T-cell (primary cell): ENCODE measurements at regions of chr14 and their contacts with region 1.

Region 1: DNA sequence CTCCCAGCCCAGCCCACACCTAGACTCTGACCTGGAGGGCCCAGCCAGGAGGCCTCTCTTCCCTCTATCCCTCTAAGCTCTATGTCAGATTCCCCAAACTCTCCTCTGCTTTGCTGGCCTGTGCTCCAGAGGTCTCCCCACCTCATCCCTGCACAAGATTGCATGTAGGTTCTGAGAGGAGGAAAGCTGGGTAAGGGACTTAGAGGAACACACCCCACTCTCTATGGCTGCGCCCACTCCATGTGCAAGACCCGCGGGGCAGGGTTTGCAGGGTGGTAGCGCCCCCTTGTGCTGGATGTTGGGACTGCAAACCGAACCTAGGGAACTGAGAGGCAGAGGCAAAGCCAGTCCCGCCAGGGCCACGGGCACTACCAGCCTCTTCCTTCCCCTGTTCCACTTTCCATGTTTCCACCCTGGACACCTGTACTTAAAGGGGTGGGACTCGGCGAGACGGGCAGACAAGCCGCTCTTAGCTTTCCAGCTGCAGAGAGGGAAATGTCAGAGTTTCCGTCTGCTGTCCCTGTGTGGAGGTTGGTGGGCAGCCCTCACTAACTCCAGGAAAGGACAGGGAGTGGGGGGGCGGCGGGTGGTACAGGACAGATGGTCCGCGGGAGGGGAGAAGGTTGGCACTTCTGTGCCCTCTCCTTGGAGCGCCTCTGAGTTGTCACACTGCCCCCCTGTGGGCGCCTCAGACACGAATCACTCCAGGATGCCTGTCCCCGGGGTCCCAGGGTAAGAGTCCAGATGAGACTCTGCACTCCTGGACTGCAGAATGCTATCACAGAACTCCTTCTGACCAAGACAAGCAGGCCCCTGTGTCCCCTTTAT is 16.8 kb downstream of the MMP14 start:
- DNase-seq: peak; percentile 64 to 95 (median 86)
- ATAC-seq: peak; percentile 90 to 92 (median 91)
- H3K4me3 ChIP-seq: peak overlapping the region; percentile 74 to 81
- H3K4me3 Mint-ChIP-seq: peak overlapping the region; percentile 75 to 79 (median 78)
- H3K27ac ChIP-seq: peak overlapping the region; percentile 25
- H3K27ac Mint-ChIP-seq: peak overlapping the region; percentile 66 to 79
- H3K4me1 ChIP-seq: peaks cover 3 to 18% of the 10 kb centered on the region in 2 experiments
- H3K4me1 Mint-ChIP-seq: peaks cover 6 to 25% (median 23%) of the 10 kb centered on the region in 3 donors
- H3K27me3 ChIP-seq: peaks cover 0 to 45% of the 10 kb centered on the region in 2 experiments
- H3K27me3 Mint-ChIP-seq: peaks cover 6 to 9% of the 10 kb centered on the region in 2 donors

Region 2: DNA sequence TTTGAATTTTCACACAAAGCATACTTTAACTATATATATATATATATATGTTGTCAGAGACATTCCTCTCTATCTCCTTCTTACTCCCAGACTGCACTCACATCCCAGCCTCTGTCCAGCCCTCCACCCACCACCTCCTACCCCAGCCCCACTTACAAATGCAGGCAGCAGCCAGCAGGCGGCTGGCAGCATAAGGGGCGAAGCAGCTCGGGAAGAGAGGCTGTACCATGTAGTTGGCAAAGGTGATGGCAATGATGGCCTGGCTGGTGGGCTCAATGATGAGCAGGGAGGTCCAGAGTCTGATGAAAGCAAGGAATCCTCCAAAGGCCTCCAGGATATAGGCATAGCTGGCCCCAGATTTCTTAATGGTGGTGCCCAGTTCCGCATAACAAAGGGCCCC is 40.4 kb before region 1 on chr14:
- CTCF ChIA-PET with region 1: interaction called, 3 to 10 read pairs
- POLR2A ChIA-PET with region 1: no interaction called
- DNase-seq: no peak
- ATAC-seq: no peak
- H3K4me3 ChIP-seq: no peak overlapping the region
- H3K4me3 Mint-ChIP-seq: no peak overlapping the region
- H3K27ac ChIP-seq: no peak overlapping the region
- H3K27ac Mint-ChIP-seq: no peak overlapping the region
- H3K4me1 ChIP-seq: peaks cover 4 to 10% of the 10 kb centered on the region in 2 experiments
- H3K4me1 Mint-ChIP-seq: peaks cover 11 to 18% (median 15%) of the 10 kb centered on the region in 3 donors
- H3K27me3 ChIP-seq: no peaks in the 10 kb centered on the region
- H3K27me3 Mint-ChIP-seq: no peaks in the 10 kb centered on the region

Region 3: DNA sequence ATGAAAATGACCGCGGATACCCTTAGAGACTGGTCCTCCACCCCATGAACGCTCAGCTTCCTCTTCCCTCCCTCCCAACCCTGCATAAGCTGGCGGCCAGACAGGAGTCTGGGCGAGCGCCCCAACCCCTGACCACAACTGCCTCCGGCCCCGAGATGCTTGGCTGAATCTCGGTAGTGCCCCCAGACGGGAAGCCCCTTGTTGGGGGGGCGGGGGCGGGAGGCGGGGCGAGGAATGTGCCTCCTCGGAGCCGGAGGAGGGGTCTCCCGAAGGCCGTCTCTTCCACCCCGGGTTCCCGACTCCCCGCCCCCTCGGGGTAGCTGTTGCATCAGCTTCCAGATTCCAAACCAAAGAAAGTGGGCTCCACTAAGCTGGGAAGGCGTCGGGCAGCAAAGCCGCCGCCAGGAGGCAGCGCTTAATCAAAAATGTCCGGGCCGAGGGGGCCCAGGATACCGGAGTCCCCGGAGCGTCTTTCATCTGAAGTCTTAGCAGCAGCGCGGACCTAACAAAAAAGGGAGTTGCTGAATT is 30.5 kb before region 1 on chr14:
- CTCF ChIA-PET with region 1: interaction called, 12 to 46 read pairs
- POLR2A ChIA-PET with region 1: no interaction called
- DNase-seq: peak in 34 of 35 experiments; percentile 29 to 83 (median 59)
- ATAC-seq: peak; percentile 89 to 93 (median 91)
- H3K4me3 ChIP-seq: peak overlapping the region; percentile 24 to 25
- H3K4me3 Mint-ChIP-seq: peak overlapping the region; percentile 41 to 54 (median 50)
- H3K27ac ChIP-seq: no peak overlapping the region
- H3K27ac Mint-ChIP-seq: no peak overlapping the region
- H3K4me1 ChIP-seq: peaks cover 7 to 21% of the 10 kb centered on the region in 2 experiments
- H3K4me1 Mint-ChIP-seq: peaks cover 15 to 22% (median 17%) of the 10 kb centered on the region in 3 donors
- H3K27me3 ChIP-seq: peaks cover 0 to 55% of the 10 kb centered on the region in 2 experiments
- H3K27me3 Mint-ChIP-seq: peaks cover 6 to 13% of the 10 kb centered on the region in 2 donors

Region 4: GRCh38 chr14:22872033-22872832 is 19.1 kb after region 1 on chr14:
- CTCF ChIA-PET with region 1: interaction called, 6 to 10 read pairs
- POLR2A ChIA-PET with region 1: interaction called in 1 of 2 experiments, 3 read pairs
- DNase-seq: peak in 34 of 35 experiments; percentile 29 to 84 (median 57)
- ATAC-seq: peak; percentile 30 to 55 (median 44)
- H3K4me3 ChIP-seq: peak overlapping the region; percentile 78 to 80
- H3K4me3 Mint-ChIP-seq: peak overlapping the region; percentile 86 to 92 (median 91)
- H3K27ac ChIP-seq: peak overlapping the region; percentile 91
- H3K27ac Mint-ChIP-seq: peak overlapping the region; percentile 97 to 98
- H3K4me1 ChIP-seq: peaks cover 12 to 56% of the 10 kb centered on the region in 2 experiments
- H3K4me1 Mint-ChIP-seq: peaks cover 29 to 45% (median 45%) of the 10 kb centered on the region in 3 donors
- H3K27me3 ChIP-seq: no peaks in the 10 kb centered on the region
- H3K27me3 Mint-ChIP-seq: no peaks in the 10 kb centered on the region

Region 5: DNA sequence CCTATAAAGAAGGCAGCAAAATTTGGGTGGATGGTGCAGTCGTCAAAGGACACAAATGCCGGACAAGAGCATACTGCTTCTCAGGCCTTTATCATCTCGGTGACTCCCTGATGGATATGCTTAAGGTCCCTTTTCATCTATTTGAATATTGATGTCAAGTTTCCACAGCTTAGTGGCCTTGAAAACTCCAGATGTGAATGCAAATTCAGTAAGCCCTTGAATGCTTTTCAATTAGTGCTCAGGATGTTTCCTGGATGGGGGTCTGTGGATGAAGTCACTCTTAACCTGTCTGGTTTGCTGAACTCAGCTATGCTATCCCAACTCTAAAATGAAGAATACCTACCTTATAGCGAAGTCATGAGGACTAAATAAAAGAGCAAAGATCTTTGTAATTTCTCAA is 40.6 kb after region 1 on chr14:
- CTCF ChIA-PET with region 1: no interaction called
- POLR2A ChIA-PET with region 1: no interaction called
- DNase-seq: no peak
- ATAC-seq: no peak
- H3K4me3 ChIP-seq: no peak overlapping the region
- H3K4me3 Mint-ChIP-seq: no peak overlapping the region
- H3K27ac ChIP-seq: no peak overlapping the region
- H3K27ac Mint-ChIP-seq: no peak overlapping the region
- H3K4me1 ChIP-seq: peaks cover 7 to 15% of the 10 kb centered on the region in 2 experiments
- H3K4me1 Mint-ChIP-seq: peaks cover 9 to 19% (median 14%) of the 10 kb centered on the region in 3 donors
- H3K27me3 ChIP-seq: no peaks in the 10 kb centered on the region
- H3K27me3 Mint-ChIP-seq: no peaks in the 10 kb centered on the region